IMR-90 (cell line): ENCODE measurements at regions of chr18 and their contacts with region 1.

Region 1: DNA sequence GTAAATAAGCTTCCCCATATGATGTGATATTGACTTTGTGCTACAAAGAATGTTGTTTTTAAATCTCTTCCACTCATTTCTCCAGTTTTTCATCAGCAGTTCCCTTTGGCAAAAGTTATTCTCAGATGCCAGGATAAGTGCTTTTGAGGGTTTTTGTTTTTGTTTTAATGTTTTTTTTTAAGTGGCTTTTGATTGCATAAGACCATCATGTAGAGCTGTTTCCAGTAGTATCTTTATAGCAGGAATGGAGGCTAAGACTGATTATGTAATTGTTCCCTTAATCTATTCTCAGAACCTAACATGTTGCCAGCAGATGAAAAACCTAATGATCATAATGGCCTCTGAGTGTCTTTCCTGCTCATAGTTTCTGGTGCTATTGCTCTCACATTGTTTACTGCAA is 77.9 kb downstream of the CABLES1 start:
- DNase-seq: no peak
- ATAC-seq: peak; percentile 31; the same call in 1 of the 2 replicates
- H3K4me3 ChIP-seq: no peak overlapping the region
- H3K27ac ChIP-seq: no peak overlapping the region
- H3K4me1 ChIP-seq: peaks cover 14% of the 10 kb centered on the region
- H3K27me3 ChIP-seq: no peaks in the 10 kb centered on the region
- CTCF ChIP-seq: no peak
- POLR2A ChIP-seq: no peak
- RAD21 ChIP-seq: no peak

Region 2: GRCh38 chr18:23871410-23871809 is 658.2 kb after region 1 on chr18:
- CTCF ChIA-PET with region 1: no interaction called
- POLR2A ChIA-PET with region 1: interaction called, 13 read pairs
- dilution Hi-C with region 1: no loop called
- in situ Hi-C with region 1: no loop called
- intact Hi-C with region 1: no loop called
- DNase-seq: no peak
- ATAC-seq: no peak
- H3K4me3 ChIP-seq: no peak overlapping the region
- H3K27ac ChIP-seq: no peak overlapping the region
- H3K4me1 ChIP-seq: no peaks in the 10 kb centered on the region
- H3K27me3 ChIP-seq: peaks cover 10% of the 10 kb centered on the region
- CTCF ChIP-seq: no peak
- POLR2A ChIP-seq: no peak
- RAD21 ChIP-seq: no peak